Activated CD8-positive, alpha-beta T cell treated with anti-CD3 and anti-CD28 coated beads, Interleukin-2, amount 10 ng/mL, durations not matched to agents 7 days and 5 days (primary cell): ENCODE measurements at regions of chr21 and their contacts with region 1.

Region 1: GRCh38 chr21:44873356-44874239 is at the start of gene PTTG1IP:
- DNase-seq: peak; percentile 99
- ATAC-seq: peak; percentile 83
- H3K4me3 Mint-ChIP-seq: peak within 1 kb of the TSS; percentile 92
- H3K27ac Mint-ChIP-seq: peak within 1 kb of the TSS; percentile 90
- H3K4me1 Mint-ChIP-seq: peaks cover 60% of the 10 kb centered on the region
- H3K27me3 Mint-ChIP-seq: no peaks in the 10 kb centered on the region
- total RNA-seq, gene PTTG1IP: 54.9 to 55.2 TPM

Region 2: GRCh38 chr21:44836666-44837471 is 36.7 kb before region 1 on chr21:
- CTCF ChIA-PET with region 1: no interaction called
- POLR2A ChIA-PET with region 1: no interaction called
- DNase-seq: no peak
- ATAC-seq: no peak
- H3K4me3 Mint-ChIP-seq: no peak overlapping the region
- H3K27ac Mint-ChIP-seq: no peak overlapping the region
- H3K4me1 Mint-ChIP-seq: no peaks in the 10 kb centered on the region
- H3K27me3 Mint-ChIP-seq: no peaks in the 10 kb centered on the region

Region 3: DNA sequence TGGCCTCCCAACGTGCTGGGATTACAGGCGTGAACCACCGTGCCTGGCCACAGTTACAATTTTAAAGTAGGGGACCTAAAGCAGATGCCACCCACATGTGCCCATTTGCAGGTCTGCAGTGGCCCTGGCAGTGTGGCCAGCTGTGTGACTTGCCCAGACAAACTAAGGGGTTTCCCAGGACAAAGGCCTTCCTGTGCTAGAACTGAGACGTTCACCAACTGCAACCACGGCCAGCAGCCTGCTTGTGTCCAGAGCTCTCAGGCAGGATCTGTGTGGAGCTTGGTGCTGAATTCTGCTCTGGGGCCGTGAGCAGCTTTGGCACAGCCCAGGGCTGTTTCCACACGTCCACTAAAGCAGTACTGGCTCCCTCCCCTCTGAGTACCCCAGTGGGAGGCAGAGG is 10.5 kb after region 1 on chr21:
- CTCF ChIA-PET with region 1: interaction called, 3 read pairs
- POLR2A ChIA-PET with region 1: interaction called, 15 read pairs
- DNase-seq: no peak
- ATAC-seq: no peak
- H3K4me3 Mint-ChIP-seq: no peak overlapping the region
- H3K27ac Mint-ChIP-seq: no peak overlapping the region
- H3K4me1 Mint-ChIP-seq: peaks cover 36% of the 10 kb centered on the region
- H3K27me3 Mint-ChIP-seq: no peaks in the 10 kb centered on the region

Region 4: GRCh38 chr21:44892536-44893277 is 19.1 kb after region 1 on chr21:
- CTCF ChIA-PET with region 1: interaction called, 11 read pairs
- POLR2A ChIA-PET with region 1: interaction called, 7 read pairs
- DNase-seq: peak; percentile 86
- ATAC-seq: peak; percentile 86
- H3K4me3 Mint-ChIP-seq: no peak overlapping the region
- H3K27ac Mint-ChIP-seq: peak overlapping the region; percentile 71
- H3K4me1 Mint-ChIP-seq: peaks cover 11% of the 10 kb centered on the region
- H3K27me3 Mint-ChIP-seq: no peaks in the 10 kb centered on the region

Region 5: GRCh38 chr21:44911389-44912157 is 38.0 kb after region 1 on chr21:
- CTCF ChIA-PET with region 1: interaction called, 3 read pairs
- POLR2A ChIA-PET with region 1: interaction called, 19 read pairs
- DNase-seq: peak; percentile 79
- ATAC-seq: peak; percentile 66
- H3K4me3 Mint-ChIP-seq: peak overlapping the region; percentile 73
- H3K27ac Mint-ChIP-seq: peak overlapping the region; percentile 80
- H3K4me1 Mint-ChIP-seq: peaks cover 80% of the 10 kb centered on the region
- H3K27me3 Mint-ChIP-seq: no peaks in the 10 kb centered on the region